Activated CD8-positive, alpha-beta T cell treated with anti-CD3 and anti-CD28 coated beads for 36 hours (primary cell): ENCODE measurements at regions of chr5 and their contacts with region 1.

Region 1: GRCh38 chr5:76402886-76403765 is at the start of gene IQGAP2:
- DNase-seq: peak; percentile 84
- ATAC-seq: peak; percentile 63
- H3K4me3 Mint-ChIP-seq: peak within 1 kb of the TSS; percentile 87
- H3K27ac Mint-ChIP-seq: peak within 1 kb of the TSS; percentile 98
- H3K4me1 Mint-ChIP-seq: peaks cover 51% of the 10 kb centered on the region
- H3K27me3 Mint-ChIP-seq: no peaks in the 10 kb centered on the region
- CTCF ChIP-seq: peak; percentile 87
- total RNA-seq, gene IQGAP2: 37.7 to 39.1 TPM

Region 2: GRCh38 chr5:76367623-76368371 is 35.3 kb before region 1 on chr5:
- CTCF ChIA-PET with region 1: interaction called, 17 read pairs
- POLR2A ChIA-PET with region 1: interaction called, 4 read pairs
- intact Hi-C with region 1: no loop called
- DNase-seq: peak; percentile 47
- ATAC-seq: peak; percentile 93
- H3K4me3 Mint-ChIP-seq: no peak overlapping the region
- H3K27ac Mint-ChIP-seq: peak overlapping the region; percentile 82
- H3K4me1 Mint-ChIP-seq: peaks cover 24% of the 10 kb centered on the region
- H3K27me3 Mint-ChIP-seq: no peaks in the 10 kb centered on the region
- CTCF ChIP-seq: no peak

Region 3: DNA sequence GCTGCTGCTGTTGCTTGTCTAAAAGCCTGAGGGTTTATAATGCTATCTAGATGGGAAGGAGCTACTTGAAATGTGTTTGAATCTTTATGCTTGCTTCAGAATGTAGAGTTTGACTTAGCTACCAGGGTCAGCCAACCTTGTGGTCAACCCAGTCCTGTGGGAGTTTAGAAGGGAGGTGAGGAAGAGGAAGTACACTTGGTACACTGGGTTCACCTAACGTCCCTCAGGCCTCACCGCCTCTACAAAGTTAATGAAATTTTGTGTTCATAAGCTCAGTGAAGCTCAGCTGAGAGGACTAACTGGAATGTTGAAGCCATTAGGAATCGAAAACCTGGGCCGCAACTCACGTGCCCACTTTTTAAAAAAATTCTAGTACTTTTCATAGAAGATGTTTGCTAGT is 10.6 kb after region 1 on chr5:
- CTCF ChIA-PET with region 1: interaction called, 24 read pairs
- POLR2A ChIA-PET with region 1: interaction called, 3 read pairs
- intact Hi-C with region 1: no loop called
- DNase-seq: no peak
- ATAC-seq: no peak
- H3K4me3 Mint-ChIP-seq: no peak overlapping the region
- H3K27ac Mint-ChIP-seq: no peak overlapping the region
- H3K4me1 Mint-ChIP-seq: peaks cover 27% of the 10 kb centered on the region
- H3K27me3 Mint-ChIP-seq: no peaks in the 10 kb centered on the region
- CTCF ChIP-seq: no peak

Region 4: DNA sequence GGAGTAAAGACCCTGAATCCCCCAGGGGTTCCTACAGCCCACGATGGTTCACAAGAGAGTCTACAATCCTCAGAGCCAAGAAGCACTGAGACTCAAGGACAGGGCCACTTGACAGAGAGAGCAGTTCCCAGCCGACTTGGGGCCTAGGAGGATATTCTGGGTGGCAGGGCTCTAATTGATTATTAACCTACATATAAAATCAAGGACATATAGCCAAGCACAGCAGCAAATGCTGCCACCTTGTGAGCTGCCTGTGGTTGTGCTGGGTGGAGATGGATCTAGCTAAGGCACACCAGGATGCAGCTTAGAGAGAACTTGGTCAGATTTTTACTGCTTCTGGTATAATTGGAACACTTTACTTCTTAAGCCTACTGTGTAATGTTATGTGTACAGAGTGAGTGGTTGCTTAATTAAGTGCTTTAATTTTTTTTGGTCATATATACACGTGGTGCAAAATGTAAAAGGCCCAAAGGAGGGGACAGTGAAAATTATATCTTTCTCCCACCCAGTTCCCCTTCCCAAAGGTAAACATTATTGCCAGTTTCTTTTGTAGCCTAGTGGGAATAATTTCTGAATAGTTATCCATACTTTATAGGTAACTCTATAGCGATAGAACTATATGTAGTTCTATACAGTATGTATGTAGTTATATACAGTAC is 141.3 kb after region 1 on chr5:
- CTCF ChIA-PET with region 1: interaction called, 62 read pairs
- POLR2A ChIA-PET with region 1: interaction called, 53 read pairs
- intact Hi-C with region 1: loop called (anchors 1 kb)
- DNase-seq: peak; percentile 75
- ATAC-seq: peak; percentile 29
- H3K4me3 Mint-ChIP-seq: peak overlapping the region; percentile 56
- H3K27ac Mint-ChIP-seq: peak overlapping the region; percentile 92
- H3K4me1 Mint-ChIP-seq: peaks cover 75% of the 10 kb centered on the region
- H3K27me3 Mint-ChIP-seq: no peaks in the 10 kb centered on the region
- CTCF ChIP-seq: peak; percentile 73